Activated CD4-positive, alpha-beta T cell treated with anti-CD3 and anti-CD28 coated beads for 36 hours (primary cell): ENCODE measurements at regions of chr2 and their contacts with region 1.

Region 1: DNA sequence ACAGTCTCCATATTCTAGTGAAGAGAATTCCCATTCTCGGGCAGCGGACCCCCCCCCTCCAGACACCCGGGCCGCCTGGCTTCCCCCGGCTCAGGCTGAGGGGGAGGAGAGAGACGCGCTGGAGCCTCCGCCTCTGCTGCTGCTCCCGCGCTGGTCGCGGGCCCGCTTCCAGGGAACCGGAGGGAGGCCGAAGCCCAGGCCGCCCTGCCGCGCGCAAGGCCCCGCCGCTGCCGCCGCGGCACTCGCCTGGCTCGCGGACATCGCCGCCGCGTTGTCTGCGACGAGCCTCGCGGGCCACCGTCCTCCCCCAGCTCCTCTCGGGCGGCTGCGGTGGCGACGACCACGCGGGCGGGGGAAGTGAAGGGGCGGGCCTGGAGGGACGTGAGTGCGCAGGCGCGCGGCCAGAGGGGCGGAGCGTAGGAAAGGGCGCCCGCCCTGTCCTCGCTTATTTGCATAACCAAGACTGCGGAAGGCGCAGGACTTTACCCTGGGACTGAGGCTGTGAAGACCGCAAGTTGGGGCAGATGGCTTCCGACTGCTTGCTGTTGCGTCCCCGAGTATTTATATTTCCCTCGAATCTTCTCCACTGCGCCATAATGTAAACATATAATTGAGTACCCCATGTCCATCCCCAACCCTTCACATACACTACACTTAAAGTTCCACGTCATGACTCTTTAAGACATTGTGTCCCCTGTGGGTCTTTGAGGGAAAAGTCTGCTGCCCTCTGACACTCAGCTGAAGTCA is at the start of gene ARL5A:
- DNase-seq: peak; percentile 97
- ATAC-seq: peak; percentile 97
- H3K4me3 Mint-ChIP-seq: peak within 1 kb of the TSS; percentile 97
- H3K27ac Mint-ChIP-seq: peak within 1 kb of the TSS; percentile 94
- H3K4me1 Mint-ChIP-seq: peaks cover 48% of the 10 kb centered on the region
- H3K27me3 Mint-ChIP-seq: no peaks in the 10 kb centered on the region
- total RNA-seq, gene ARL5A: 60.8 to 64.9 TPM

Region 2: GRCh38 chr2:150860301-150860700 is 968.0 kb before region 1 on chr2:
- CTCF ChIA-PET with region 1: no interaction called
- POLR2A ChIA-PET with region 1: no interaction called
- intact Hi-C with region 1: no loop called
- DNase-seq: no peak
- ATAC-seq: no peak
- H3K4me3 Mint-ChIP-seq: no peak overlapping the region
- H3K27ac Mint-ChIP-seq: no peak overlapping the region
- H3K4me1 Mint-ChIP-seq: no peaks in the 10 kb centered on the region
- H3K27me3 Mint-ChIP-seq: no peaks in the 10 kb centered on the region

Region 3: DNA sequence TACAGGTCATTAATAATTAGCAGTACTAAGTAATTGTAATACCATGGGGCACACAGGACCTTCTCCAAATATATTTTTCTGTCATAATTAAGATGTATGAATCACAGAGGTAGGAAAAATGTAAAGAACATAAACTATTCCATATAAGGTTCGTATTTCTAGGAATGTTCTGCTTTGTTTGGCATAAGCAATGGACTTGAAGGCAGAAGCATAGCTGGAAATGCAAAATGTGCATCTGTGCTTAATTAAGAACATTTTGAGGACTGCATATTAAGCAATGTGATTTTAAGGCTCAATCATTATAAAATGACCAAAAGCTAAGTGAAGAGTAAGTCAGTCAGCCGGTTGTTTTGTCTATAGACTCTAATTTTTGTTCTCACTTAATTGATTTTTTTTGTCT is 689.8 kb before region 1 on chr2:
- CTCF ChIA-PET with region 1: no interaction called
- POLR2A ChIA-PET with region 1: no interaction called
- intact Hi-C with region 1: no loop called
- DNase-seq: no peak
- ATAC-seq: no peak
- H3K4me3 Mint-ChIP-seq: no peak overlapping the region
- H3K27ac Mint-ChIP-seq: no peak overlapping the region
- H3K4me1 Mint-ChIP-seq: no peaks in the 10 kb centered on the region
- H3K27me3 Mint-ChIP-seq: no peaks in the 10 kb centered on the region

Region 4: DNA sequence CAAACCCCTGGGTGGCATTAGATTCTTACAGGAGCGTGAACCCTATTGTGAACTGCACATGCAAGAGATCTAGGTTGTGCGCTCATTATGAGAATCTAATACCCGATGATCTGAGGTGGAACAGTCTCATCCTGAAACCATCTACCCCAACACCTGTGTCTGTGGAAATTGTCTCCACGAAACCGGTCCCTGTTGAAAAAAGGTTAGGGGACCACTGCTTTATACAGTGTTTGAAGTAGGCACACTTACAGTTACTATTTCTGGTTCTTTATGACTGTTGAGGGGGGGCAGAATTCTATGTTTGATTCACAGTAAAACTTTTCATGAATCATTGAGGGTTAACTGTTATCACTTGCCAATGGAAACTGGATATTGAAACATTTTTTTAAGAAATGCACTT is 346.6 kb before region 1 on chr2:
- CTCF ChIA-PET with region 1: no interaction called
- POLR2A ChIA-PET with region 1: no interaction called
- intact Hi-C with region 1: loop called (anchors 5 to 10 kb)
- DNase-seq: peak; percentile 62
- ATAC-seq: peak; percentile 84
- H3K4me3 Mint-ChIP-seq: no peak overlapping the region
- H3K27ac Mint-ChIP-seq: peak overlapping the region; percentile 68
- H3K4me1 Mint-ChIP-seq: peaks cover 41% of the 10 kb centered on the region
- H3K27me3 Mint-ChIP-seq: no peaks in the 10 kb centered on the region

Region 5: GRCh38 chr2:151638191-151638933 is 190.0 kb before region 1 on chr2:
- CTCF ChIA-PET with region 1: no interaction called
- POLR2A ChIA-PET with region 1: no interaction called
- intact Hi-C with region 1: loop called (anchors 5 kb)
- DNase-seq: peak; percentile 35
- ATAC-seq: peak; percentile 52
- H3K4me3 Mint-ChIP-seq: peak overlapping the region; percentile 19
- H3K27ac Mint-ChIP-seq: peak overlapping the region; percentile 79
- H3K4me1 Mint-ChIP-seq: peaks cover 31% of the 10 kb centered on the region
- H3K27me3 Mint-ChIP-seq: no peaks in the 10 kb centered on the region

Region 6: DNA sequence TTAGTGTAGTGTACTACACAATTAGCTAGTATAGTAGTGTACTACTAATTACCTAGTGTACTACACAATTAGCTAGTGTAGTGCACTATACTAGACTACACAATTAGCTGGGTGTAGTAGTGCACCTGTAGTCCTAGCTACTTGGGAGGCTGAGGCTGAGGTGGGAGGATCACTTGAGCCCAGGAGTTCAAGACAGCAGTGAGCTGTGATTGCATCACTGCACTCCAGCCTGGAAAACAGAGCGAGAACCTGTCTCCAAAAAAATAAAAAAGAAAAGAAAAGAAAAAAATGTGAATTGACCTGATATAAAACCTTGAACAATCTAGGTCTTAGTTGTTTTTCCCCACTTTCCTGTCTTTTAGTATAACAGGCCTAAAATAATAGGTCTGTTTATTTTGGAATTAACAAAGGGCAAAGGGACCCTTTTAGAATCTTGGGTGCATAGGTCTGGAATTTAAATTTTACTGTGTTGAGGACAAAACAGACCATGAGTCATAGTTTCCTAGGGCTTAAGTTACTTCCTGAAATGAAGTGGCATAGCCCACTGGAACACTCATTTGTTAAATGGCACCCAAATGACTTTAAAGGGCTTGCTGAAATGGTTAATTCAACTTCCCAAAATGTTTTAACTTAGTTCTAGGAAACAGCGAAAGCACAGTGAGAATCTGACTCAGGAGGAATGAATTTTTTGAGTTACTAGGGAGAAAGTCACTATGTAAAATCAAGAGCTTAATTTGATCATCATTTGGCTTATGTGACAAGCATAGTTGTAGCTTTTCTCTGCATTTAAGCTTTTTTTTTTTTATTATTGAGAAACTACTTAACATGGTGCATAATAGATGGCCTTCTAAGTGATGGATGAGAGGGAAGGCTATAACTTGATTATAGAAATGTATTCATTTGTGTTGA is 50.6 kb after region 1 on chr2:
- CTCF ChIA-PET with region 1: interaction called, 3 read pairs
- POLR2A ChIA-PET with region 1: no interaction called
- intact Hi-C with region 1: loop called in 1 of 2 experiments (anchors 2 kb)
- DNase-seq: no peak
- ATAC-seq: peak; percentile 64
- H3K4me3 Mint-ChIP-seq: no peak overlapping the region
- H3K27ac Mint-ChIP-seq: peak overlapping the region; percentile 29
- H3K4me1 Mint-ChIP-seq: peaks cover 9% of the 10 kb centered on the region
- H3K27me3 Mint-ChIP-seq: peaks cover 1% of the 10 kb centered on the region

Region 7: GRCh38 chr2:152407204-152407721 is 578.9 kb after region 1 on chr2:
- CTCF ChIA-PET with region 1: no interaction called
- POLR2A ChIA-PET with region 1: no interaction called
- intact Hi-C with region 1: loop called in 1 of 2 experiments (anchors 10 kb)
- DNase-seq: peak; percentile 59
- ATAC-seq: peak; percentile 80
- H3K4me3 Mint-ChIP-seq: peak overlapping the region; percentile 24
- H3K27ac Mint-ChIP-seq: peak overlapping the region; percentile 67
- H3K4me1 Mint-ChIP-seq: peaks cover 29% of the 10 kb centered on the region
- H3K27me3 Mint-ChIP-seq: peaks cover 17% of the 10 kb centered on the region

Region 8: DNA sequence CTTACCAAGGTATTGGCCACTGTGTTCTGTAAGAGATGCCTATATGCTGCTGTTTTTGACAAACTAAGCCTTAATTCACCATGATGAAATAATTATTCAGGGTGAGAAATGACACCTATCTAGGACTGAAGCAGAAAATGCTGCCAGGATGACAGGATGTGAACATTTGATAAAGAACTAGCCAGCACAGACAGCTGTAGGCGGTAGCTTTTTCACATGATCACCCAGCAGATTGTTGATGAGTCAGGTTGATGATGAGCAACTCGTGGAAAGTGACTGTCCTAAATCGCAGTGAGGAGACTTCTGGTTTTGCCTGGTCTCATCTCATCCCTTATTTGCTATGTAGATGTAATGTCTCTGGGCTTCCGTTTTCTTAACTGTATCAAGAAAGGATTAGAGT is 744.9 kb after region 1 on chr2:
- CTCF ChIA-PET with region 1: no interaction called
- POLR2A ChIA-PET with region 1: no interaction called
- intact Hi-C with region 1: loop called in 1 of 2 experiments (anchors 5 kb)
- DNase-seq: peak; percentile 73
- ATAC-seq: peak; percentile 97
- H3K4me3 Mint-ChIP-seq: no peak overlapping the region
- H3K27ac Mint-ChIP-seq: peak overlapping the region; percentile 52
- H3K4me1 Mint-ChIP-seq: peaks cover 8% of the 10 kb centered on the region
- H3K27me3 Mint-ChIP-seq: peaks cover 2% of the 10 kb centered on the region

Region 9: DNA sequence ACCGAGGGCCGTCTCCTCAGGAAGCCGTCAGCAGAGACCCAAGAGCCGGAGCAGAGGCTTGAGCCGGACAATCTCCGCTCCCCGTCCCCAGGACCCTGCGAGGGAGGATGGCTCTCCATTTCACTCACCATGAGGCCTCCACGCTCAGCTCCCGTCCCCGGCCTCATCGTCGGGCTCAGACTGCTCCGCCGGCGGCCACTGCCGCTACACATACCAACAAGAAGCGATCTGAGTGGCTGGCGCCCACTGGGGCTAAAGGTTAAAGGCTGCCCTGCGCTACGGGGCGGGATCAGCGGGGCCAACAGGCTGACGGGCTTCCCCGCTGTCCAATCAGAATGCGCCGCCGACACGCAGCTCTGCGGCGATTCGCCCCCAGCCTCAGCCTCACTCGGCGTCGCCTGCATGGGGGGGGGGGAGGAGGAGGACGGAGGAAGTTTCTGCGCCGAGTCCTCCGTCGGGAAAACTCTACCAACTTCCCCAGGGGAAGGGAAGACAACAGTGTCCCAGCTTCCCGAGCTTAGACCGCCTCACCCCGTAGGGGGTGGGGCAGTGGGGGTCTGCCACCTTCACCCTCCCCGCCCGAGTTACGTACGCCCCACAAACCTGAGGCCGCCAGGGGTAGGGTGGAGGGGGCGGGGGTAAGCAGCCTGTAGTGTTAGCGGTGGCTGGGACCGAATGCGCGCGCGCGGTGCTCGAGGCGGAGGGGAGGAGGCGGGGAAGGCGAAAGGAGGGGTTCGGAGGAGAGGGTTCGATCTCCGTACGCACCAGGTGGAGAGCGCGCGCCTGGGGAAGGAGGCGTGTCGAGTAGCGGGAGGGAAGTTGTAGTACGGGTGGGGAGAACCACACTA is 889.1 kb after region 1 on chr2 and contains the start of gene PRPF40A:
- CTCF ChIA-PET with region 1: no interaction called
- POLR2A ChIA-PET with region 1: no interaction called
- intact Hi-C with region 1: loop called in 1 of 2 experiments (anchors 1 kb)
- DNase-seq: peak; percentile 99
- ATAC-seq: peak; percentile 82
- H3K4me3 Mint-ChIP-seq: peak within 1 kb of the TSS; percentile 99
- H3K27ac Mint-ChIP-seq: peak within 1 kb of the TSS; percentile 99
- H3K4me1 Mint-ChIP-seq: peaks cover 61% of the 10 kb centered on the region
- H3K27me3 Mint-ChIP-seq: no peaks in the 10 kb centered on the region
- total RNA-seq, gene PRPF40A: 145 to 152 TPM